Activated CD8-positive, alpha-beta T cell treated with anti-CD3 and anti-CD28 coated beads for 36 hours (primary cell): ENCODE measurements at regions of chr10 and their contacts with region 1.

Region 1: DNA sequence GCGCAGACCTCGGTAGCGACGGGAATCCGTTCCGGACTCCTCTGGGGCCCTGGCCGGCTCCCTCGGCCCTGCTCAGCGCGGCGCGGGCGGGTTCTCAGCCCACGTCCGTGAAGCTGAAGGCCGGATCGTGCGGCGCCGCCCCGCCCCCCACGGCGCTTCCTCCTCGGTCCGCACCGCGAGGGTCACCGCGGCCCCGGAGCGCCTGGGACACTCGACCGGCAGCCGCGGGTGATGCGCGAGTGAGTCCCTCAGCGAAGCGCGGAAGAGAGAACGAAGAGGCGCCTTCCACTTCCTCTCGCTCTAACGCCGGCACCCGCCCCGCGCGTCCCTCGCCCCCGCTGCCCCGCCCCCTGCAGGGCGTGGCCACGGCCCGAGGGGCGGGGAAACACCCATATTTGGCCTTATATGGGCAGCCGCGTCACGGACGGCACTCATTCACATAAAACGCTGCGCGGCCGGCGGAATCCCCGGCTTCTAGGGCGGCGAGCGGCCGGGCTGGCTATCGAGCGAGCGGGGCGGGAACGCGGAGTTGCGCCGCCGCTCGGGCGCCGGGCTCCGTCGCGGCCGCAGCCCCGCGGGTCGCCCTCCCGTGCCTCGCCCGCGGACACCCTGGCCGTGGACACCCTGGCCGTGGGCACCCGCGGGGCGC is at the start of gene DUSP5:
- DNase-seq: peak; percentile 96
- ATAC-seq: peak; percentile 84
- H3K4me3 Mint-ChIP-seq: peak within 1 kb of the TSS; percentile 99
- H3K27ac Mint-ChIP-seq: peak within 1 kb of the TSS; percentile 93
- H3K4me1 Mint-ChIP-seq: peaks cover 38% of the 10 kb centered on the region
- H3K27me3 Mint-ChIP-seq: peaks cover under 1% of the 10 kb centered on the region
- CTCF ChIP-seq: no peak
- total RNA-seq, gene DUSP5: 49.4 to 50.8 TPM

Region 2: DNA sequence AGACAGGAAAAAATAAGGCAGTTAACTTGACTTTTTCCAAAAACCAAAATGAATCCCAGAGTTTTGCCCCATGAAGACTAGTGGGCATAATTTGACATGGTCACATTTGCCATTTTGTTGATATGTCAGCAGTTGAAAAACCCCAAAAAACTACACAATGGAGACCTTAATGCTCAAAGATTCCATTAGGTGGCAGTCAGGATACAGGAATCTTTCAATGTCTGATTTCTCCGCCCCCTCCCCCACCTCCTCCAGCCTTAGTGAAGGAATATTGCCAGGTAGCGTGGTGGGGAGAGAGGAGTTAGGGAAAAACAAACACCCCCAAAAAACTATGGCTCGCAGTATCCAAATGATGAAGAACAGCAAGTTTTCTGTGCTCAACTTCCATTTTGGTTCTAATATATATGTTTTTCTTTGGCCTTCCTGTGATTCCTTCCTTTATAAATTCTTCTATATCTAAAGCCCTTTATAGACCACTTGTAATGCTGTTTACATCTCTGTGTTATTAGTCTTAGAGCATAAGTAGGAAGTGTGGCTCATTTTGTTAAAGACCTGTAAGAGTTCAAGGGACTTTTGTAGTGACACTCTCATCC is 186.1 kb before region 1 on chr10:
- CTCF ChIA-PET with region 1: interaction called, 37 read pairs
- POLR2A ChIA-PET with region 1: interaction called, 4 read pairs
- intact Hi-C with region 1: loop called (anchors 5 kb)
- DNase-seq: peak; percentile 56
- ATAC-seq: peak; percentile 67
- H3K4me3 Mint-ChIP-seq: no peak overlapping the region
- H3K27ac Mint-ChIP-seq: no peak overlapping the region
- H3K4me1 Mint-ChIP-seq: peaks cover 20% of the 10 kb centered on the region
- H3K27me3 Mint-ChIP-seq: peaks cover 6% of the 10 kb centered on the region
- CTCF ChIP-seq: peak; percentile 64

Region 3: GRCh38 chr10:110414563-110415309 is 82.8 kb before region 1 on chr10:
- CTCF ChIA-PET with region 1: interaction called, 3 read pairs
- POLR2A ChIA-PET with region 1: interaction called, 5 read pairs
- intact Hi-C with region 1: loop called (anchors 2 kb)
- DNase-seq: peak; percentile 97
- ATAC-seq: peak; percentile 94
- H3K4me3 Mint-ChIP-seq: peak overlapping the region; percentile 37
- H3K27ac Mint-ChIP-seq: peak overlapping the region; percentile 89
- H3K4me1 Mint-ChIP-seq: peaks cover 63% of the 10 kb centered on the region
- H3K27me3 Mint-ChIP-seq: no peaks in the 10 kb centered on the region
- CTCF ChIP-seq: no peak

Region 4: DNA sequence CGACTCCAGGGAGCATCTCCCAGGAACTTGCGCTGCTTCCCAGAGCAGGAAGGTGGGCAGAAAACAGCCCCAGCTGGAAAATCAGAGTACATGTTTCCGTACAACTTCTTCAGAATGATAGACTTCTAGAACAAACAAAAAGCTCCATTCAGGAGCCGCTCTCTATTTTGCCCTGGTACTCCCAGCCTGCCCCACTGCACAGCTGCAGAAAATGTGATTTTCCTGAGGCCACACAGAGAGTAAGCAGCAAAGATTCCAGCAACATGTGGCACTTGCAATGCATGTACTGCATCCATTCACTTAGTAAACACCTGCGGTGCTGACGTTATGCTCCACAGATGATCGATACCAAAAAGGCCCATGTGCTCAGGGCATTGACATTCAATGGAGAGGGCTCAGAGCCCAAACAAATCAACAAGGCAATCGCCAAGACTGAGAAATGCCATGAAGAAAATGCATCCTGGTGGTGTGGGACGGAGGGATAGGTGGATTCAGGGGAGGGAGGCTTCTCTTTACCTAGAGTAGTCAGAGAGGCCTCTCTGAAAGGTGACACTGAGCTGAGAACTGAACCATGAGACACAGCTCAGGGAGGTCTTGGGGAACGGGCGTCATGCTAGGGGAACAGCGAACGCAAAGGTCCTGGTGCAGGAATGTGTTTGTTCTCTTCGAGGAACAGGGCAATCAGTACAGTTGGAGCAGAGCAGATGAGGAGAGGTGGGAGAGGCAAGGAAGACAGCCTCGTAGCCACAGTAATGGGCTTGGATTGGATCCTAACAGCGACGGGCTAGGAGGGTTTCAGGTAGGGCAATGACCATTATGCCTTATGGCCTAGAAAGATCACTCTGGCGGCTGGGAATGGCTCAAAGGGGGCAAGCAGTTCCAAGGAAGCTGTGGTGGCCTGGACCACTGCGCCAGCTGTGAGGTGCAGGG is 35.1 kb before region 1 on chr10:
- CTCF ChIA-PET with region 1: no interaction called
- POLR2A ChIA-PET with region 1: no interaction called
- intact Hi-C with region 1: no loop called
- DNase-seq: no peak
- ATAC-seq: no peak
- H3K4me3 Mint-ChIP-seq: no peak overlapping the region
- H3K27ac Mint-ChIP-seq: no peak overlapping the region
- H3K4me1 Mint-ChIP-seq: peaks cover 27% of the 10 kb centered on the region
- H3K27me3 Mint-ChIP-seq: no peaks in the 10 kb centered on the region
- CTCF ChIP-seq: no peak

Region 5: DNA sequence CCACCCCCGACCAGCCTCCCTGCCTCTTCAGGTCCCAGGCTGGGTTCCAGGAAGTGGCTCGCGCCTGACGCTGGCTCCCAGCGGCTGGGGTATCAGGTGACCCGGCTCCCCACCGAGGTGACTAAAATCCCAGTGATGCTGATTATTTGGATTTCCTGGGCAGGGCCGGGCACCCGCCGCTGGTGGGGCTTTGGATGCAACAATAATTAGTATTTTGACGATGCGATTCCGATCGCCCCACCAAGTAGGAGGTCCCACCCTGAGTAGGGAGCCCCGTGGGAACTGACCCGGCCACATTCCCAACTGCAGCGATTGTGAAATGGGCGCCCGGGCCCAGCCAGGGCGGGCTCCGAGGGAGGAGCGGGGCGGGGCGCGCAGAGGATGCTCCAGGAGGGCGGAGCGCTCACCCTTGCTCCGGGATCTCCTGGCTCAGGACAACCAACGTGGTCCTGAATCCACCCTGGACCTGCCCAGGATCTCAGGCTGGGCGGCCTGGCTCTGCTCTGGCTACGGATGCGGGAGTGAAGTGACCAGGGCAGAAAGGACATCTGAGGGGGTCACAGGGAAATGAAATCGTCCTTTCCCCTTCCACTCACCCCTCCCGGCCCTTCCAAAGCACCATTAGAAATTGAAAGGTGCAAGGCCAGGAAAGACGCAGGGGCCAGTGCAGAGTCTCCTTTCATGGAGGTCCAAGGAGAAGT is 32.7 kb after region 1 on chr10:
- CTCF ChIA-PET with region 1: interaction called, 6 read pairs
- POLR2A ChIA-PET with region 1: interaction called, 18 read pairs
- intact Hi-C with region 1: no loop called
- DNase-seq: peak; percentile 29
- ATAC-seq: no peak
- H3K4me3 Mint-ChIP-seq: no peak overlapping the region
- H3K27ac Mint-ChIP-seq: no peak overlapping the region
- H3K4me1 Mint-ChIP-seq: peaks cover 65% of the 10 kb centered on the region
- H3K27me3 Mint-ChIP-seq: no peaks in the 10 kb centered on the region
- CTCF ChIP-seq: no peak

Region 6: DNA sequence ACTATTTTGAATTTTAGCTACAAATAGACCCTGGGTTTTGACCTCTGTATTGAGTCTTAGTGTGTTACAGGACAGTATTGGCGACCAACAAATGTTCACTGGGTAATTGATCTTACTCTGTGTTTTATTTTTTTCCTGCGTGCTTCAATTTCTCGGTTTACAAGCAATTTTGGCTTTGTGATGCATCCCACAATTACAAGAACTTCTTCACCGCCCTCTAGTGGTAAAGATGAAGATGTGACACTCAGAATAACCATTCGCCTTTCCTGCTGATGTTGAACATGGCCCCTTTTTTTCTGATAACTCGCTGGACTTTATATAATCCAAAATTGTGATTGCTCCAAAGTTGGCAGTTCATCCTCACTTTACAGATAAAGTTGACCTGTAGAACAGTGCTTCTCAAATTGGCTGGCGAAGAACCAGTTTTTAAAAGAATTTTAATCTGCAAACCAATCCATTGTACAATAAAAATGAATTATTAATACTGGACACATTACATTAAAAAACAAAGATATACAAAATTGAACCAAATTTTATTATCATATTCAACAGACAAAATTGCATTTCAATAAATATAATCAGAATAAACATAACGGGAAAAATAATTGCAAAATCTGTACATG is 49.7 kb after region 1 on chr10:
- CTCF ChIA-PET with region 1: interaction called, 26 read pairs
- POLR2A ChIA-PET with region 1: interaction called, 6 read pairs
- intact Hi-C with region 1: no loop called
- DNase-seq: no peak
- ATAC-seq: peak; percentile 77
- H3K4me3 Mint-ChIP-seq: no peak overlapping the region
- H3K27ac Mint-ChIP-seq: no peak overlapping the region
- H3K4me1 Mint-ChIP-seq: peaks cover 10% of the 10 kb centered on the region
- H3K27me3 Mint-ChIP-seq: peaks cover 21% of the 10 kb centered on the region
- CTCF ChIP-seq: peak; percentile 91